CD8-positive, alpha-beta memory T cell (primary cell): ENCODE measurements at regions of chr2 and their contacts with region 1.

Region 1: DNA sequence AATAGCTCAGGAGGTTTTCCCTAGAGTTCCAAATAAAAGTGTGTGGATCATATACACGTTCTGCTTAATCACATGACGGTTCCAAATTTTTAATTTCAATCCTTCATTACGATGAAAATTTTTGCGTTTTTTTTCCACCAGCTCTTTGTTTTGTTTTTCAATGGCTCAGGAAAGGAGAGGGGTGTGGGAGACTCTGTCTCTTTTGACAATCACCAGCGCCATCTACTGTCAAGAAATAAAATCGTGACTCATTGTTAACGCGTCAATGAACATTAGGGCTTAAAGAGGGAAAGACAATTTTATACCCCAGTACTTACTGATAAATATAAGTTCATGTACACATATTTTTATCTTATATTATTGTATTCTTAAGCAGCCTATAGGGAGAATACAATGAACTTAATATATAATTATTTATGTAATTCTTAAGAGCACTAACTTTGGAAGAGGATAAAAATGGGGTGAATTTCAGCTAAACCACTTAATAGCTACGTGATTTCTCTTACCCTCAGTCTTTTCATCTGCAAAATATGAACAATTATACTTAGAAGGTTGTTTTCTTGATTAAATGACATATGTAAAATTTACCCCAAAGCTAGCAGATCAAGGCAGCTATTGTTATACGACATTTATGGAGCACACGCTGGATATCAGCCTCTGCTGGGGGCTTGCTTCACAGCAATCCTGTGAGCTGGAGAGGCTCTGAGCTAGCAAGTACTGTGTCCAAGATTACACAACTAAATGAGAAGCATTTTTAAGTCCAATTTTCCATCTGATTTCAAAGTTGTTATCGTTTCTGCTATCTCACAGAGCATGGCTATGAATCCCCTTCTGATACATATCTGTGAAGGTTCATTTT is 47.4 kb upstream of the RMDN2 start:
- DNase-seq: peak in 3 of 5 donors; percentile 12 to 45 (median 41)
- H3K4me3 ChIP-seq: no peak overlapping the region
- H3K4me3 Mint-ChIP-seq: no peak overlapping the region
- H3K27ac ChIP-seq: no peak overlapping the region
- H3K27ac Mint-ChIP-seq: no peak overlapping the region
- H3K4me1 ChIP-seq: no peaks in the 10 kb centered on the region
- H3K4me1 Mint-ChIP-seq: no peaks in the 10 kb centered on the region
- H3K27me3 ChIP-seq: no peaks in the 10 kb centered on the region
- H3K27me3 Mint-ChIP-seq: peaks cover 2 to 32% of the 10 kb centered on the region in 2 donors

Region 2: DNA sequence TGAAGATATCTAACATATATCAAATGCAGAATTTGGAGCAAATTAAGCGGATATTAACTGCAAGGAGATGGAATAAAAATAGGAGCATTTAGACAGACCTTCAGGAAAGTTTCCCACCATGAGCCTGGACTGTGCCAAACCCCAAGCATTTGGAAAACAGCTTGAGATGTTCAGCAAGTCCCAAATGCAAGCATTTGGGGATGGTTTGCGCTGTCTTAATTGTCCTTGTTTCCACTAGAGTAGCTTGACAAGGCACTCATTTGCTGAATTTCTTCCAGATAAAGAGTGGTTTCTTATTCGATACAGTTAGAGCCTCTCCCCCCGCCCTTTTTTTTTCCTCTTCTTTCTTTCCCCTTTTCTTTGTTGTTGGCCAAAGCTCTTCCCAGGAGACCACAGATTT is 129.1 kb before region 1 on chr2:
- CTCF ChIA-PET with region 1: no interaction called
- POLR2A ChIA-PET with region 1: no interaction called
- DNase-seq: no peak
- H3K4me3 ChIP-seq: no peak overlapping the region
- H3K4me3 Mint-ChIP-seq: no peak overlapping the region
- H3K27ac ChIP-seq: no peak overlapping the region
- H3K27ac Mint-ChIP-seq: peak overlapping the region in 1 of 8 donors; percentile 40
- H3K4me1 ChIP-seq: no peaks in the 10 kb centered on the region
- H3K4me1 Mint-ChIP-seq: peaks cover 3 to 13% (median 9%) of the 10 kb centered on the region in 3 donors
- H3K27me3 ChIP-seq: no peaks in the 10 kb centered on the region
- H3K27me3 Mint-ChIP-seq: peaks cover 0 to 1% of the 10 kb centered on the region in 2 donors

Region 3: DNA sequence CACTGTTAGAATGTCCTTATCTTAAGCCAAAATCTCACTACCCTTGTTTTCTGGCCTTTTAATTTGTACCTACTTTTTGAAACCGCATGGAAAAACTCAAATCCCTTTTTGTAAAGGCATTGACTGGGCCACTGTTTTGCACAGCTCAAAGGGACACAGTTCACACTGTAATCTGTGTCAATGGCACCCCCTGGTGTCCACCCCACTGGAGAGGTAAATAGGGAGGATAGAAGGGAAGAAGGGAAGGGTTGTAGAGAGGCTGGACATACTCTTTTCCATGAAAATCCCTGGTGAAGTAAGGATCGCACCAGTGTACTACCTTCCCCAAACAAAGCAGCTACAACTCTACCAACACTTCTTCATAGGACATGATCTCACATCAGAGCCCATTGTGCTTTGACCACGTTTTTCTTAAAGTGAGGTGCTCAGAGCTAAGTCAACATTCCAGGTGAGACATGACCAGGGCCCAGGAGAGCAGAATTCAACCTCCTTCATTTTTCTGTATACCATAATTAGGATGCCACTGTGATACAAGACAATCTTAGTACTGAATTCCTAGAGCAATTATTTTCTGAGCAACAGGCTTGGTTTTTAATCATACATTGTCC is 45.0 kb before region 1 on chr2:
- CTCF ChIA-PET with region 1: interaction called, 18 read pairs
- POLR2A ChIA-PET with region 1: no interaction called
- DNase-seq: peak; percentile 57 to 88 (median 76)
- H3K4me3 ChIP-seq: no peak overlapping the region
- H3K4me3 Mint-ChIP-seq: no peak overlapping the region
- H3K27ac ChIP-seq: no peak overlapping the region
- H3K27ac Mint-ChIP-seq: no peak overlapping the region
- H3K4me1 ChIP-seq: no peaks in the 10 kb centered on the region
- H3K4me1 Mint-ChIP-seq: peaks cover 5 to 14% (median 9%) of the 10 kb centered on the region in 3 donors
- H3K27me3 ChIP-seq: no peaks in the 10 kb centered on the region
- H3K27me3 Mint-ChIP-seq: peaks cover 0 to 3% of the 10 kb centered on the region in 2 donors

Region 4: DNA sequence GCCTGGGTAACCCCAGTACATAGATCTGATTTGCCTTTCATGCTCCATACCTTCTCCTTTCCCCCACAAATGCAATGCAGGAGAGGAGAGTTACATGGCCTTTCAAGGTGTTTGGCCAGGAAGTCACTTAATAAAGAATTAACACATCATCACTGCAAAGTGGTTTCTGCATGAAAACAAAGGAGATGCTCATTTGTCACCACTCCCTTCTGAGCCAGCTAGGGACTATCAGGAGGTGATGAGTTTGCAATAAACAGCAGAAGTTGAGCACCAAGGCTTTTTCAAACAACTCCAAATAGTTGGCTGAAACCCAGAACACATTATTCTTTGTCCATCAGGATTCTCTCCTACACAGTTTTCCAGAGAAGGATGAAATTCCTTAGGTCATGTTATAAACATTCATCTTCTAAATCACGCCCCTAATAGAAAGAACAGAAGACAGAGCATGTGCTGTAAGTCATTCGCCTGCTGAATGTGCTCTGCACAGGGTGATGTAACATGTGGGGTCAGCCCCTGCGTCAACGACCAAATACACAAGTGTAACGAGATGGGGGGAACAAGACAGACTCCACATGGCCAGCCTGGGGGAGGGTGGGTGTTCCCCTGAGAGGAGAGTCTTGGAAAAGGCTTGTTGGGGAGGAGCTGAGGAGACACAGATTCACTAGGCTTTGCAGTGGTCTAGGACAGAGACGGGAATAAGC is 39.9 kb before region 1 on chr2:
- CTCF ChIA-PET with region 1: interaction called, 18 read pairs
- POLR2A ChIA-PET with region 1: no interaction called
- DNase-seq: no peak
- H3K4me3 ChIP-seq: no peak overlapping the region
- H3K4me3 Mint-ChIP-seq: no peak overlapping the region
- H3K27ac ChIP-seq: no peak overlapping the region
- H3K27ac Mint-ChIP-seq: no peak overlapping the region
- H3K4me1 ChIP-seq: no peaks in the 10 kb centered on the region
- H3K4me1 Mint-ChIP-seq: peaks cover 0 to under 1% (median under 1%) of the 10 kb centered on the region in 3 donors
- H3K27me3 ChIP-seq: no peaks in the 10 kb centered on the region
- H3K27me3 Mint-ChIP-seq: peaks cover 1 to 12% of the 10 kb centered on the region in 2 donors

Region 5: DNA sequence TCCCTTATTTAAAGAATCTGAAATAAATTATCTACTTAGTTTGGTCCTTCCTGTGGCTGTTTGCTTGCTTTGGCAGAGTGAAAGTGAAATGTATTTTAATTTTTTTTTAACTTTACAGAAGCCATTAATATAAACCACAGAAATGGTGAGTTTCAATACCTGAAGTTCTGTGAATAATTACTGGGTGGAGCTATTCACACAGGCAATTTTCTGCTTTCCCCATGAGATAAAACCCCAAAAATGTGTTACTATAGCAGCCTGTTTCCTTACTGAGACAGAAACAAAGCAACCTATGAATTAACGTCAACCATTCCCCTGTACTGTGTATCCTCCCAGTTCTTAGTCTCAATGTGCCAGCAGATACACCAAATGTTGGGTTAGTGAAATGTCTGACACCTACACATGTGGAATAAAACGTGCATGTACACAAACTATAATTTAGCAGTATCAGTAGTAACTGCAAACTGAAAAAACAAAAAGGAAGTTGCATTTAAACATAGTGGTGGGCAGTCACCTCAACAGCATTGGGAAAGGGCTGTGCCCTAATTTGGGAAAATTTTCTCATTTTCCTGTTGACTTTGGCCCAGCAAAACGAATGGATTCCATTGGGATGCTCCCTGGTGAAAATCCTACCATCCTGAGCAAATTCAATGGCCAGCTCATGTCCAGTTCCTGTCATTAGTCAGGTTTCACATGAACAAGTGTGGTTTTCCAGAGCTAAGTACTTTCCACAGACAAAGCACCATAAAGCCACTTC is 25.7 kb before region 1 on chr2:
- CTCF ChIA-PET with region 1: interaction called, 15 read pairs
- POLR2A ChIA-PET with region 1: no interaction called
- DNase-seq: peak in 1 of 5 donors; percentile 49
- H3K4me3 ChIP-seq: peak overlapping the region; percentile 29
- H3K4me3 Mint-ChIP-seq: peak overlapping the region in 5 of 7 donors; percentile 5 to 62 (median 32)
- H3K27ac ChIP-seq: peak overlapping the region; percentile 35
- H3K27ac Mint-ChIP-seq: peak overlapping the region in 7 of 8 donors; percentile 18 to 88 (median 72)
- H3K4me1 ChIP-seq: peaks cover 13% of the 10 kb centered on the region
- H3K4me1 Mint-ChIP-seq: peaks cover 15 to 22% (median 19%) of the 10 kb centered on the region in 3 donors
- H3K27me3 ChIP-seq: no peaks in the 10 kb centered on the region
- H3K27me3 Mint-ChIP-seq: peaks cover 3% of the 10 kb centered on the region in 2 donors